Activated CD4-positive, alpha-beta T cell treated with anti-CD3 and anti-CD28 coated beads for 36 hours (primary cell): ENCODE measurements at regions of chr16 and their contacts with region 1.

Region 1: GRCh38 chr16:1342526-1343427 is 8.9 kb downstream of the TSR3 start:
- DNase-seq: peak; percentile 96
- ATAC-seq: peak; percentile 98
- H3K4me3 Mint-ChIP-seq: peak overlapping the region; percentile 47
- H3K27ac Mint-ChIP-seq: no peak overlapping the region
- H3K4me1 Mint-ChIP-seq: peaks cover 17% of the 10 kb centered on the region
- H3K27me3 Mint-ChIP-seq: no peaks in the 10 kb centered on the region

Region 2: GRCh38 chr16:1331712-1332617 is 10.8 kb before region 1 on chr16:
- CTCF ChIA-PET with region 1: interaction called, 6 read pairs
- POLR2A ChIA-PET with region 1: interaction called, 5 read pairs
- intact Hi-C with region 1: loop called in 1 of 2 experiments (anchors 1 kb)
- DNase-seq: peak; percentile 58
- ATAC-seq: peak; percentile 19
- H3K4me3 Mint-ChIP-seq: no peak overlapping the region
- H3K27ac Mint-ChIP-seq: no peak overlapping the region
- H3K4me1 Mint-ChIP-seq: peaks cover 15% of the 10 kb centered on the region
- H3K27me3 Mint-ChIP-seq: peaks cover 23% of the 10 kb centered on the region

Region 3: GRCh38 chr16:1408171-1408837 is 65.5 kb after region 1 on chr16:
- CTCF ChIA-PET with region 1: no interaction called
- POLR2A ChIA-PET with region 1: no interaction called
- intact Hi-C with region 1: loop called in 1 of 2 experiments (anchors 1 kb)
- DNase-seq: peak; percentile 95
- ATAC-seq: peak; percentile 94
- H3K4me3 Mint-ChIP-seq: peak overlapping the region; percentile 63
- H3K27ac Mint-ChIP-seq: no peak overlapping the region
- H3K4me1 Mint-ChIP-seq: peaks cover 18% of the 10 kb centered on the region
- H3K27me3 Mint-ChIP-seq: no peaks in the 10 kb centered on the region

Region 4: GRCh38 chr16:1656808-1657617 is 314.2 kb after region 1 on chr16:
- CTCF ChIA-PET with region 1: no interaction called
- POLR2A ChIA-PET with region 1: no interaction called
- intact Hi-C with region 1: no loop called
- DNase-seq: no peak
- ATAC-seq: no peak
- H3K4me3 Mint-ChIP-seq: no peak overlapping the region
- H3K27ac Mint-ChIP-seq: no peak overlapping the region
- H3K4me1 Mint-ChIP-seq: no peaks in the 10 kb centered on the region
- H3K27me3 Mint-ChIP-seq: no peaks in the 10 kb centered on the region